H1 (cell line): ENCODE measurements at regions of chr15 and their contacts with region 1.

Region 1: DNA sequence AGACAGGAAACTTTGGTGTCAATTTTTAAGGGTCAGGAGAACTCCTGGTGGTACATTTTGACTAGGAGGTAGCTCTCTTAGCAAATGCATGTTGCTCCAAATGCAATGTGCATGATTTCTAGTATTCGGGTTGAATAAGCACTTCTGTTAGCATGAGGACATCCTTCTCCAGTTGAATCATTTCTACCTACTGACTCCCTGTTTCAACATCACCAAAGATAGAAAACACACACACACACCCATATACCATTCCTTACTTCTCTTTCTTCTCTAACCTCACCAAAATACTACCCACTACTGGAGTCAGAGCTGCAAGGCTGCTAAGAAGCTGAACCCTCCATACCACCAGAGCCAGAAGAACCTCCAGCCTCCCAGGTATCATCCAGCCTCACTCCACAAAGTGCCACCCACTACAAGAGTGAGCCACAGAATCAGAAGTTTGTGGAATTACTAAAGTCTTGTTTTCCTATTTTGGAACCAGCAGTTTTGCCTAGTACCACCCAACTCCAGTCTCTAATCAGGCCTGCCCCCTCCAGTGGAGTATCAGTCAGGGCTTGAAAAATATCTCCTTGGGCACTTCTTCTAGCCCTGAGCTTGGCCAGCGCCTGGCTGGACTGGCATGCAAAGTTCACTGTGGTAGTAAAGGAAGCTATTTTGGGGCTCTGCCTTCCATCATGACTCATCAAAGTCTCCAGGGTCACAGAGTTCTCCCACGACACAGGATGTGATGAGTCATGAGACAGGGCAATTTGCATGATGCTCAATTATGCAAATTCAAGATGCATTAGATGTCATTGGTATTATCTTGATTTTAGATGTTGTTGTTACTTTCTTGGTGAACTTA is 110.2 kb downstream of the CYP19A1 start:
- DNase-seq: peak in 1 of 2 experiments; percentile 7
- H3K4me3 ChIP-seq: no peak overlapping the region
- H3K27ac ChIP-seq: no peak overlapping the region
- H3K4me1 ChIP-seq: peaks cover 0 to 4% (median 1%) of the 10 kb centered on the region in 4 experiments; a peak in 2 of 7 replicates
- H3K27me3 ChIP-seq: no peaks in the 10 kb centered on the region
- CTCF ChIP-seq: no peak
- EP300 ChIP-seq: no peak
- POLR2A ChIP-seq: no peak
- RAD21 ChIP-seq: no peak

Region 2: DNA sequence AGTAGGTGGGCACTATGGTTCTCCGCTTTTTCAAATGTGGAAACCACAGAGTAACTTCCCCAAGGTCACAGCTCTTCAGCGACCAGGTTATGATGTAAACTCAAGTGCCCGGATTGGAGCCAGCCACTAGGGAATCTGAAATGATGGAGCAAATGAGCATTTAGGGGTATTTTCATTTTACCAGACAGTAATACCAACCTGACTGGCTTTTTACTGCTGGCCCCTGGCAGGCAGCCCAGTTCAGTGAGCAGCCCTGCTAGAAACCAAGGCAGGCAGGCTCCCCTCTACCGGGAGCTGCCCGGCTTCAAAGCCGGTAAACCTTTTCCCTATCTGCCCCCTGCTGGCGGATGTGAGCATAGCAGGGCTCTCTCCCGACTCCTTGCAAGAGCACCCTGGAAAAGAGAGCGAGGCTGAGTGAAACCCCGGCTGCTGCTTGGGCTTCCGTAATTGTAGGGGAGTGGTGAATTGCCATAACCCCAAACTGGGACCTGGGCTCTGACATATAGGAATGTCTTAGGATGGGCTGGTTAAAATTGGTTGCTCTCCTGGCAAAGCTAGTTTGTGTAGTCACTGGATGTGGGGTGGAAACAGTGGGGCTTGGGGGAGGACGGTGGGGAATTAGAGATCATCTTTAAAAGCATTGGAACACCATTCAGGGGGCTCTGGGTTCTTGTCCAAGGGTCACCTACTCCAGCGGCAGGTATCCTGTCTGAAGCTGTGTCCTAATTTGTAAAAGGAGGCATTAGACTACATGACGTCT is 35.5 kb before region 1 on chr15:
- CTCF ChIA-PET with region 1: interaction called, 18 read pairs
- POLR2A ChIA-PET with region 1: no interaction called
- DNase-seq: peak; percentile 87 to 100
- H3K4me3 ChIP-seq: no peak overlapping the region
- H3K27ac ChIP-seq: no peak overlapping the region
- H3K4me1 ChIP-seq: no peaks in the 10 kb centered on the region
- H3K27me3 ChIP-seq: no peaks in the 10 kb centered on the region
- CTCF ChIP-seq: peak; percentile 80 to 92 (median 88)
- EP300 ChIP-seq: no peak
- POLR2A ChIP-seq: no peak
- RAD21 ChIP-seq: peak; percentile 78 to 81

Region 3: GRCh38 chr15:51203797-51204196 is 24.4 kb before region 1 on chr15:
- CTCF ChIA-PET with region 1: interaction called, 15 read pairs
- POLR2A ChIA-PET with region 1: no interaction called
- DNase-seq: no peak
- H3K4me3 ChIP-seq: no peak overlapping the region
- H3K27ac ChIP-seq: no peak overlapping the region
- H3K4me1 ChIP-seq: no peaks in the 10 kb centered on the region
- H3K27me3 ChIP-seq: no peaks in the 10 kb centered on the region
- CTCF ChIP-seq: no peak
- EP300 ChIP-seq: no peak
- POLR2A ChIP-seq: no peak
- RAD21 ChIP-seq: no peak

Region 4: GRCh38 chr15:51239748-51240465 is 11.7 kb after region 1 on chr15:
- CTCF ChIA-PET with region 1: interaction called, 34 read pairs
- POLR2A ChIA-PET with region 1: no interaction called
- DNase-seq: no peak
- H3K4me3 ChIP-seq: no peak overlapping the region
- H3K27ac ChIP-seq: no peak overlapping the region
- H3K4me1 ChIP-seq: peaks cover 0 to 11% (median 2%) of the 10 kb centered on the region in 4 experiments; a peak in 3 of 7 replicates
- H3K27me3 ChIP-seq: no peaks in the 10 kb centered on the region
- CTCF ChIP-seq: no peak
- EP300 ChIP-seq: no peak
- POLR2A ChIP-seq: no peak
- RAD21 ChIP-seq: no peak

Region 5: DNA sequence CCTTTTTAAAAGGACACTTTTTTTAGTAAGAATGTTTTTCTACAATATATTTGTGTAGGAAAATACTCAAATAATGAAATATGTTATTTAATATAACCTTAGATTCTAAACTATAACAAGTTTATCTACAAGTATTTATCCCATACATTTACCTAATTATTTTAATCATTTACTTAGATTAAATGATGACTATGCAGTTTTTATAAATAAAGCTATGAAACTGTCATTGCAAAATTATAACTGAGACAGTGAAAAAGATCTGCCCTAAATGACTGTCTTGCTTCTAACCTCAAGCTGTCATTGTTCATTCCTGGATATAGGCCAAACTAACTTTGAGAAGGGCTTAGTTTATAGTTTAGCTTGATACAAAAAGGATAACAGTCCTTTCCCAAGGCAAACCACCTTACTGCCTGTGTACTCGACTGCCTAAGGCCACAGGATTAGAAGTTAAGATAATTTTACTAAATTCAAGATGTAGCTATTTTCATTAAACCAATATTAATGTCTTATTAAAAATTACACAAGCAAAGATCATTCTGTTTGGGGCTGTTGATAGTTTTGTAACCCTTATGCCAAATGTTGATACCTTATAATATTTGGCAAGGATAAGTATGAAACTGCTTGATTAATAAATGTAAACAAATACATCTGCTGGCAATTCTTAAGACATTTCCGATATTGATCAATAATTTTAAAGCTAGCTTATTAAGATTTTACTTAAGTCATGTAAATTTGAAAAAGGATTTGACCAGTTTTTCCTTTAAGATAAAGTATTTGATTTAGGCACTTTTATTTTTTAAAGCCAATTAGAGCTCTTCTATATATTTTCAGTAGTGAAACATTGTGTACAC is 197.6 kb after region 1 on chr15:
- CTCF ChIA-PET with region 1: no interaction called
- POLR2A ChIA-PET with region 1: no interaction called
- DNase-seq: no peak
- H3K4me3 ChIP-seq: no peak overlapping the region
- H3K27ac ChIP-seq: no peak overlapping the region
- H3K4me1 ChIP-seq: no peaks in the 10 kb centered on the region; a peak in 1 of 7 replicates
- H3K27me3 ChIP-seq: no peaks in the 10 kb centered on the region
- CTCF ChIP-seq: no peak
- EP300 ChIP-seq: no peak
- POLR2A ChIP-seq: no peak
- RAD21 ChIP-seq: no peak

Region 6: GRCh38 chr15:51499379-51499976 is 271.3 kb after region 1 on chr15:
- CTCF ChIA-PET with region 1: interaction called, 10 read pairs
- POLR2A ChIA-PET with region 1: no interaction called
- DNase-seq: no peak
- H3K4me3 ChIP-seq: no peak overlapping the region
- H3K27ac ChIP-seq: no peak overlapping the region
- H3K4me1 ChIP-seq: no peaks in the 10 kb centered on the region
- H3K27me3 ChIP-seq: no peaks in the 10 kb centered on the region
- CTCF ChIP-seq: peak in 2 of 3 experiments; percentile 63 to 85; a peak in 3 of 4 replicates
- EP300 ChIP-seq: no peak
- POLR2A ChIP-seq: no peak
- RAD21 ChIP-seq: peak; percentile 81 to 83